Left cardiac atrium (tissue), 4 donors: ENCODE measurements at regions of chr7 and their contacts with region 1.

Region 1: DNA sequence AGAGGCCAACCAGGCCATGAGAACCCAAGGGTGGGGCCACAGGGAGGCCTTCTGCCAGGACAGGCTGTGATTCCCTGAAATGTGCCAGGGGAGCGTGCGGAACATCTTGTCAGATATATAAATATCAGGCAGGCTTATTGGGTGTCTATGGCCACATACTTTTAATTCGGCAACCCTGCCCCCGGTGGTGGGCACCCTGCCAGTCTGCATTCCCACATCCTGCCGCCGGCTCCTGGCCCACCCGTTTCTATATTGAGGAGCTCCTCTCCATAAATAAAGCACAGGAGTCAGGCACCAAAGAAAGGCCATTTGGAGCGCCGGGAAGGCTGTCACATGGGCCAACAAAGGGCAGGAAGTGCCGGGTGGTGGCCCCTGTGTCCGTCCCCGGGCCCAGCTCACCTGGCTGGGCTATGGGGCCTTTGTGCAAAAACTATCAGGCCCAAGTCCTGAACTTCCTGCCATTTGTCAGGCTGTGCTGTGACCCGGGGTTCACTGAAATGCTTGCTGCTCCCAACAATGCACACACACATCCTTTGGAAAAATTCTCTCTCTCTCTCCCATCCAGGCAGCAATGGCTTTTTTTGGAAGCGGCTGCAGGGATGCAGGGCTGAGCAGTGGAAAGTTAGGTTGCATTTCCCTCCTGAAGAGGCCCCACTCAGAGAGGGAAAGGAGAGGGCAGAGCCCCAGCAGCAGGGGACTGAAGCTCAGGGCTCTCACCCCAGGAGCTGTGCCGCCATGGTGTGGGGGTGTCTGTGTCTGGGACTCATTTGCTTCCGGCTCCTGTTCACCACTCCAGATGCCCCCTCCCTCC is 25.0 kb upstream of the PODXL start:
- DNase-seq: peak; percentile 84
- ATAC-seq: peak; percentile 83

Region 2: DNA sequence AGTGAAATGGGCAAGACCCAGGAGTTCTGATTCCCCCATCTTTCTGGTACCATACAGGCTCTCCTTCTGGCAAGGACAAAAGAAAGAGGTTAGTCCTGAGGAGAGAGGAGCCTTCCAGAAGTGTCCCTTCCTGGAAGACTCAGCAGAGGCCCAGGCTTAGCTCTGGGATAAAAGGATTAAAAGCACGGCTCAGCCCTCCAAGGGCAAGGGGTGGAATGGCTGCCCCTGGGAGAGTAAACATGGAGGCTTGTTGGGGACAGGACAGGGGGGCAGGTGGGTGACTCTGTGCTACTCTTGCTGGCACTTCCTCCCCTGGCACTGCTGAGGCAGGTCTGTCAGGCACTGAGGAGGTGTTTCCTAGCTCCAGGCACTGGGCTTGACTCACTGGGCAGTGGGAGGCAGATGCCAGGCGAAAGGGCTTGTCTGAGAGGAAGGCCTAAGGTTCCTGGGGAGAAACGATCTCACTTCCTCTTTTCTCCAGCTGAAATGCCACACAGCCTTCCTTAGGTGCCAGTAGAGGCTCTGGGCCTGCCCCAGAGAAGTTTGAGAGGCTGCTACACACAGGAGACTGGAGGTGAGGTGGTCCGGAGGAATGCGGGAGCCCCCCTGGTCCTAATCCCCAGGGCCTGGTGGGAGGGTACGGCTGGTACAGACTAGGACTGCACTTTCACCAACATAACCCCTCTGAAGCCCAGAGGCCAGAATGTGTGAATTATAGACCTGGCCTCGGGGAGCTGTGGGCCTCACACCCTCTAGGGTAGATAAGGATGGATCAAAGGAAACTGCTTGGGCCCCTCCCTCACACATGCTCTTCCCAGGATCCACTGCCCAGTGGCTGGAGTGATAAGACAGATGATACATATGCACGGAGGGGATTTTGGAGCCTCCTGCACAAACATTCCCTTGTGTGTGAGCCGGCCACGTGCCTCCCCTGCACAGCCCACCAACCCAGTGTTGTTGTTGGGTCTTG is 38.2 kb after region 1 on chr7:
- intact Hi-C with region 1: loop called in 1 of 2 experiments (anchors 5 kb)
- DNase-seq: no peak
- ATAC-seq: peak in 1 of 2 donors; percentile 40